MCF 10A (cell line): ENCODE measurements at regions of chr7 and their contacts with region 1.

Region 1: GRCh38 chr7:31134246-31135188 is 82.4 kb downstream of the ADCYAP1R1 start:
- DNase-seq: peak; percentile 84
- H3K4me3 Mint-ChIP-seq: no peak overlapping the region
- H3K27ac Mint-ChIP-seq: no peak overlapping the region
- H3K4me1 Mint-ChIP-seq: no peaks in the 10 kb centered on the region
- H3K27me3 Mint-ChIP-seq: peaks cover 26% of the 10 kb centered on the region
- CTCF ChIP-seq: peak; percentile 77

Region 2: DNA sequence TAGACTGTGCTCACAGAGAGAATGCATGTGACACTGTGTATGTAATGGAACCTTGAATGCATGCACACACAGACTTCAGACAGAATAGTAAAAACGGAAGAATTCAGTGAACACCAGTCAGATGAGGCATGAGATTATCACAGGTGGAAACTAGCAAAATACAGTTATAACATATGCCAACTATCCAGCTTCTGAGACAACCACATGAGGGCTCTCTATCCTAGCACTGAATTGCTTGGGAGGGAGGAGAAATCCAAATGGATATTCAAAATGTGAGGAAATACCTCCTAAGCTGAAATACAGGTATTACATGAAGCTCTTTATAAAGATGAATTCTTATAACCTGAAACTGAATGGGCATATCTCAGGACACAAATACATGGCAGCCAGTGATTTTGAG is 509.2 kb before region 1 on chr7:
- CTCF ChIA-PET with region 1: no interaction called
- POLR2A ChIA-PET with region 1: no interaction called
- intact Hi-C with region 1: no loop called
- DNase-seq: no peak
- H3K4me3 Mint-ChIP-seq: no peak overlapping the region
- H3K27ac Mint-ChIP-seq: no peak overlapping the region
- H3K4me1 Mint-ChIP-seq: no peaks in the 10 kb centered on the region
- H3K27me3 Mint-ChIP-seq: no peaks in the 10 kb centered on the region
- CTCF ChIP-seq: no peak

Region 3: DNA sequence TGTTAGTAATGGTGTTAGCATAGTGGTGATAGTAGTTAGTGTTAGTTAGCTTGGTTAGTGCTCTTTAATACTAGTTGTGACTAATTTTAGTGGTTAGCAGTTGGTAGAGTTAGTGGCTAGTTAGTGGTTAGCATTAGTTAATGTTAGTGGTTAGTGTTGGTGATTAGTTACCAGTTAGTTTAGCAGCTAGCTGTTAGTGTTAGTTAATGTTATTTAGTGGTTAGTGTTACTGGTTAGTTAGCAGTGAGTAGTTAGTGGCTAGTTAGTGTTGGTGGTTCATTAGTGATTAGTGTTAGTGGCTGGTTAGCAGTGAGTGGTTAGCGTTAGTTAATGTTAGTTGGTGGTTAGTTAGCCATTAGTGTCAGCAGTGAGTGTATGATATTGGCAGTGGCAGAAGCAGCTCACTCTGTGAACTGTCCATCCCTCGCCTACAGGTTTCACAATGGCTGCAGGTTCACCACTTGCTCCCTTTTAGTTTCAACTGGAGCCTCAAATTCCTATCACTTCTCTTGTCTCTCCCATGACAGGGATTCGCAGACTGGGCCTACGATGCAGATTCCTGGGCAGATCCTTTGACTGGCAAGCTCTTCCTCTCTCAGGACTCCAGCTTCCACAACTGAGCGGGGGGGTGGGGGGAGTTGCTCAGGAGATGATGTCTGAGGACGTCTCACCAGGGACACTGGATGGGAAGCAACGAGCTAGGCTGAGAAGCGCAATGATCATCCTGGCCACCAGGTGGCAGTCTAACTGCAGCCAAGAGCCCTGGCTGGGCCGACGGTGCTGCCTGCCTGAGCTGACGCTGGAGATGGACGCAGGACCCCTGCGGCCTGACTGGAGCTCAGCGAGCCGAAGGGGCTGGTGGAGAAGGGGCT is 151.2 kb before region 1 on chr7:
- CTCF ChIA-PET with region 1: interaction called, 743 read pairs
- POLR2A ChIA-PET with region 1: no interaction called
- intact Hi-C with region 1: no loop called
- DNase-seq: peak; percentile 75
- H3K4me3 Mint-ChIP-seq: no peak overlapping the region
- H3K27ac Mint-ChIP-seq: no peak overlapping the region
- H3K4me1 Mint-ChIP-seq: peaks cover 11% of the 10 kb centered on the region
- H3K27me3 Mint-ChIP-seq: peaks cover 66% of the 10 kb centered on the region
- CTCF ChIP-seq: peak; percentile 86

Region 4: GRCh38 chr7:31160941-31161340 is 26.4 kb after region 1 on chr7:
- CTCF ChIA-PET with region 1: interaction called, 16 read pairs
- POLR2A ChIA-PET with region 1: no interaction called
- intact Hi-C with region 1: no loop called
- DNase-seq: no peak
- H3K4me3 Mint-ChIP-seq: no peak overlapping the region
- H3K27ac Mint-ChIP-seq: no peak overlapping the region
- H3K4me1 Mint-ChIP-seq: no peaks in the 10 kb centered on the region
- H3K27me3 Mint-ChIP-seq: peaks cover 50% of the 10 kb centered on the region
- CTCF ChIP-seq: no peak

Region 5: DNA sequence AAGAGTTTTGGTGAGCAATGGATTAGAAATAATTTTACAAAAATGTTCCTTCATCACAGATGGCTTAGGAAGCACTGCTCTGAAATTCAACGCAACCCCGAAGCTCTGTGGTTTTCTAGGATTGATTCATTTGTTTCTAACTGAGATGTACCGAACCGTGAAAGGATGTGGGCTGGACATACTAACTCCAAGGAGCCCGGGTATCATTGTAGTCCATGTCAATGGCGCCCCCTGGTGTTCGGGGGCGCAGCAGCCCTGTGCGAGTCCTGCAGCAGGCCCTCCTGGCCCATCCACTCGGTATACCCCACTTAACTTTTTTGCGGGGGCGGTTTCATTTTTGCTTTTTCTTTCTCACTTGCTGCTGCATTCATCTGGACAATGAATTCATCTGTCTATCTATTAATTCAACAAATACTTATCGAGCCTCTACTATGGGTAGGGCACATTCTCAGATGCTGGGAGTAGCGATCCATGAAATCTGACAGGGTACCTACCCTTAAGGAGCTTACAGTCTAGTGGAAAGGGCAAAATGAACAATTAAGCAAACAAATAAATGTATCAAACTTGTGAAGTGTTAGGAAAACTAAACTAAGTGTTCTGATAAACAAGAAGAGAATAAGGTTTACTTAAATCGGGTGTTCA is 354.2 kb after region 1 on chr7:
- CTCF ChIA-PET with region 1: interaction called, 6 read pairs
- POLR2A ChIA-PET with region 1: no interaction called
- intact Hi-C with region 1: loop called (anchors 2 kb)
- DNase-seq: peak; percentile 65
- H3K4me3 Mint-ChIP-seq: no peak overlapping the region
- H3K27ac Mint-ChIP-seq: no peak overlapping the region
- H3K4me1 Mint-ChIP-seq: no peaks in the 10 kb centered on the region
- H3K27me3 Mint-ChIP-seq: no peaks in the 10 kb centered on the region
- CTCF ChIP-seq: peak; percentile 77

Region 6: DNA sequence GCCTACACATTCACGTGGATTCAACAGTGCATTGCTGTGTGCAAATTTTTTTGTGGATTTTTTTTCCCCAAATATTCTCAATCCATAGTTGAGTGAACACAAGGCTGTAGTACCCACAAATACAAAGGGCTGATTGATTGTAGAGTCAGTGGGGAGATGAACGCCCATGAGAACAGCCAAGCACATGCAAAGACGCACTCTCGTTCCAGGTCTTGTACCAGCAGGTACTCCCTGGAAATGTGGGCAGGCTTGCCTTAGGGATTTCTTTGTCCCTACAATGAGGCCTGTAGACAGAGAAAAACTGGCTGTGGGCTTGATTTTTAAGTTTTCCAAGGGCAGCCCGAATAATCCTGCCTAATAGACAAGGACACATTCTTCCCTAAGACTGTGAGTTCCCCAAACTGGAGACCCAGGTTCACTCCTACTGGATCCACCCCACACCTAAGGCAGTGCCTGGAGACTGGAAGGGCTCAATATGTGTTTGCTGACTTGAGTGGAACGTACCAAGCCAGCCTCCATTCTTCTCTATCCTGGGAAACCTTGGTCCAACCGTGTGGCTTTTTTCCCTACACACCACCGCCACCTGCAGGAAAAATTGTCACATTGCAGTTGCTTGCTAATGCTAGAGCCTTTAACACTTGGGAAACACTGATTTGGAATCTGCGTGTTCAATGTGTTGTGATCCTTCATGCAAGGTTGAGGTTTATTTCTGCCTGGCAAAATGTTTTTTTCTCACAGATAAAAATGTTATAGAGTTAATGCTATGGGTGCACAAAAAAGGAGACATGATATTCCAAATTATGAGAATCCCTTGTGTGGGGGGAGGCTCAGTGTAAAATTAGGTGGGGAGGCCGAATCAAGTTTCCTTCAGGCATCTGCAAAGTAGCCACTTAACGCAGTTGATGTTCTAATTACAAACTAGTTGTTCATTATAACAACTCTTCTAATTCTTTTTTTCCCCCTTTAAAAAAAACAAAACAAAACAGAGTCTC is 601.8 kb after region 1 on chr7:
- CTCF ChIA-PET with region 1: interaction called, 26 read pairs
- POLR2A ChIA-PET with region 1: no interaction called
- intact Hi-C with region 1: loop called (anchors 1 kb)
- DNase-seq: peak; percentile 81
- H3K4me3 Mint-ChIP-seq: no peak overlapping the region
- H3K27ac Mint-ChIP-seq: no peak overlapping the region
- H3K4me1 Mint-ChIP-seq: peaks cover 6% of the 10 kb centered on the region
- H3K27me3 Mint-ChIP-seq: peaks cover 24% of the 10 kb centered on the region
- CTCF ChIP-seq: peak; percentile 86